ENCODE measurements at regions of chr4 and their contacts with region 1.

Region 1: GRCh38 chr4:155442267-155443105 is 65.7 kb upstream of the MAP9 start:
- DNase-seq: peak; percentile 87 to 88
- H3K4me3 ChIP-seq: peak overlapping the region; percentile 23 to 28
- H3K27ac ChIP-seq: peak overlapping the region; percentile 49 to 55
- H3K4me1 ChIP-seq: peaks cover 0 to 12% (median 4%) of the 10 kb centered on the region in 4 donors
- H3K27me3 ChIP-seq: no peaks in the 10 kb centered on the region
- CTCF ChIP-seq: peak; percentile 88 to 95

Region 2: DNA sequence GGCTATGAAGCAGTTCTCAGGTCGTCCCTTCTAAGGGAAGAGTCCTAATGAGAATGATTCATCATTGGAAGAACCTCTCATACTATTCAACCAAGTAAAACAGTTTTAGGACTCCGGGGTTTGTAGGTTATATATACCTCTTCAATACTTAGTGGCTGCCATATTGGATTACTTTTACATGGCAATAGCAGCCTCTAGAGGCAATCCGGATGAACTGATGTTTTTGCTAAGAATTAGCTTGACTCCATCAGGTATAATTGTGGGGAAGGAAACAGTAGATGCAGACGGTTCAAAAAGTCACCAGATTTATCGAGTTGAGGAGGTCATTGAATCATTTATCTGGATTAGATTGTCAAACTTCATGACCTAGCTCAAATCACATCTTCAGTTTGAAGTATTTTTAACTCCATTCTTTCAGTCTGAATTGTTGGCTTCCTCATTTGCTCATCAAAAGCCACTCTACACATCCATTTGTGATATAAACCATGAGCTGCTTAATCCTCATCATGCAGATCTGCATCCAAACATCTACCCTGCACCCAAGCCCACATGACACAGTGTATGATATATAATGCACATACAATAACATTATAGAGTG is 344.7 kb after region 1 on chr4:
- intact Hi-C with region 1: loop called (anchors 5 kb)
- DNase-seq: no peak
- H3K4me3 ChIP-seq: no peak overlapping the region
- H3K27ac ChIP-seq: peak overlapping the region in 1 of 2 donors; percentile 47
- H3K4me1 ChIP-seq: peaks cover 0 to 54% (median 6%) of the 10 kb centered on the region in 4 donors
- H3K27me3 ChIP-seq: no peaks in the 10 kb centered on the region
- CTCF ChIP-seq: peak; percentile 65 to 74